Pancreas (tissue), 10 donors: ENCODE measurements at regions of chr10 and their contacts with region 1.

Region 1: DNA sequence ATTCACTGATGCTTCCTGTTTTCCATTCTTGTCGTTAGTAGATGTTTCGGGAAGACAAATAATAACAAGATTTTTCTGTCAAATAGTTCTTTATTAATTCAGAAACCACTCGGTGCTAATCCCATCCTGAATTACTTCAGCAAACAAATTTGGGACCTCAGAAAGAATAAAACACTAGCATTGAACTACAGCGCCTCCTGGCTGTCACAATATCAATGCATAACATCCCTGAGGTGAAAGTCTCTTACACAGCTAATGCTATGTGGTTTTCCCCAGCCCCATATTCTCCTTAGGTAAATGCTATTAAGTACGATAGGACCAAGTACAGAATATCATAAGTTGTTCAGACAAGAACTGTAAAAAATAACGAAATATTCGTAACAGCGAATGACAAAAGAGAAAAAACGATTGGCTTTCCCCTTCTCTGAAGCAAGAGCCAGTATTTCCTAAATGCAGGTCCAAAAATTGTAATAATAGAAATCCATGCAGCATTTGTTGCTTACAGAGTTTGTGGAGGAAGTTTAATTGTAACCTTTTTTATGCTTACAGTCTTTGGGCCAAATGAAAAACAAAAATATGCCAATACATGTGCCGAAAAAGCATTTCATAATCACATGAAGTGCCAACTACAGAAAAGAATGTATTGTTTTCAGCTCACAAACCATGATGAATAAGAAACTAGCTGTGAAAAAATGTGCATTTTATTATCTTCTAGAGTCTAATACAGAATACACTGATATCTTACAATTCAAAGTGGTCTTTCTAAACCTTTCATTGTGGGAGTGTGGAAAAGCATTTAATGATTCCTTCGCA is 47.3 kb downstream of the MYPN start:
- DNase-seq: peak in 3 of 6 donors; percentile 27 to 61 (median 32)
- ATAC-seq: peak in 3 of 4 donors; percentile 61 to 67 (median 62)
- H3K4me3 ChIP-seq: no peak overlapping the region
- H3K27ac ChIP-seq: no peak overlapping the region
- H3K4me1 ChIP-seq: peaks cover 0 to 15% (median 9%) of the 10 kb centered on the region in 3 donors
- H3K27me3 ChIP-seq: no peaks in the 10 kb centered on the region
- CTCF ChIP-seq: peak; percentile 47 to 57 (median 56)

Region 2: DNA sequence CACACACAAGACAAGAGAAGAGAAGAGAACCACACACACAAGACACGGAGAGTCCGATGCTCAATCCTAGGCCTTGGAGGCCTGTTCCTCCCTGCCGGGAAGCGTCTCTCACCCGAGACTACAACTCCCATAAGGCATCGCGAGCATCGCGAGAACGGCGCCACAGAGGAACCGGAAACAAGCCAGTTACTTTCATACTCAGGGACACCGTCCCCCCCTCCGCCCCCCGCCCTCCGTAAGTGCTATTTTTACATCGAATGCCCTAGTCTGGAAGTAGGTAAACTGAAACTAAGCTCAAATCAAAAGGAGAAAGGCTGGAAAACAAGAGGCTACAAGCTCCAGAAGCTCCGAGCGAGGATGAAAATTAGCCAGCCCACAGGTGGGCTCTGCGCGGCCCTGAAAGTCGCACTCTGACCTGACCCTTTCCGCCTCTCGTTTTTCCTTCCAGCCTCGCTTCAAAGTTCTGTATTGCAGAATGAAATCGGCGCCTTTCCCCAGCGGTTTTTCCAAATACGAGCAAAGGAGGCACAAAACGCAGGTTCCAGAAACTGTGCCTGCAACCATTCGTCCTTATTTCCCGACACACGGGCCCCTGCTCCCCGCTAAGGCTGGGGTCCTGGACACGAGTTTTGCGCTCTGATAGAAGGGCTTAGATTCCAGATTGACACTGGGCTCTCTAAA is 307.1 kb before region 1 on chr10:
- intact Hi-C with region 1: loop called in 1 of 3 experiments (anchors 10 kb)
- DNase-seq: peak; percentile 93 to 96 (median 94)
- ATAC-seq: peak; percentile 97 to 99 (median 98)
- H3K4me3 ChIP-seq: peak overlapping the region; percentile 58 to 88 (median 62)
- H3K27ac ChIP-seq: peak overlapping the region; percentile 84 to 97 (median 91)
- H3K4me1 ChIP-seq: peaks cover 0 to 6% (median 3%) of the 10 kb centered on the region in 3 donors
- H3K27me3 ChIP-seq: no peaks in the 10 kb centered on the region
- CTCF ChIP-seq: no peak

Region 3: GRCh38 chr10:67861750-67862460 is 294.7 kb before region 1 on chr10:
- intact Hi-C with region 1: loop called in 2 of 3 experiments (anchors 5 to 10 kb)
- DNase-seq: no peak
- ATAC-seq: no peak
- H3K4me3 ChIP-seq: no peak overlapping the region
- H3K27ac ChIP-seq: no peak overlapping the region
- H3K4me1 ChIP-seq: no peaks in the 10 kb centered on the region
- H3K27me3 ChIP-seq: no peaks in the 10 kb centered on the region
- CTCF ChIP-seq: no peak

Region 4: GRCh38 chr10:68082872-68083271 is 73.7 kb before region 1 on chr10:
- intact Hi-C with region 1: loop called in 1 of 3 experiments (anchors 5 kb)
- DNase-seq: no peak
- ATAC-seq: peak in 3 of 4 donors; percentile 62 to 71 (median 63)
- H3K4me3 ChIP-seq: no peak overlapping the region
- H3K27ac ChIP-seq: no peak overlapping the region
- H3K4me1 ChIP-seq: peaks cover 0 to 4% (median 0%) of the 10 kb centered on the region in 3 donors
- H3K27me3 ChIP-seq: no peaks in the 10 kb centered on the region
- CTCF ChIP-seq: peak in 1 of 4 donors; percentile 19